Heart right ventricle (tissue), 16 donors: ENCODE measurements at regions of chr18 and their contacts with region 1.

Region 1: DNA sequence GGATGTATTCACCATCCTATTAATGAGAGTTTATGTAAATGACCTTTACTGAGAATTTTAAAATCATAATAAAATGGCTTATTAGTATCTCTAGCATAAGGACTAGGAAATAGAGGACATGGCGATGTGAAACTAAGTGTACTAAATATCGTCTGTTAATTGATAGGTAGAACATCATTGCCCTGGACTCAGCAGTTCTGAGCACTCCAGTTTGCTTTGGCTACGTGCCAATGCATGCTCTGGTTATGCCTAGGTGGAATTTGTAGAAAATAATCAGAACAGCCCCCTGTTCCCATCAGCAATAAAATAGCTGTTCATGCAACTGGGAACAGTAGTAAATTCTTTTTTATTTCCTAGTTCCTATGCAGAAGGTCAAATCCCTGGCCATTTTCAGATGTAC is 247.8 kb downstream of the DOK6 start:
- DNase-seq: no peak
- ATAC-seq: no peak
- H3K4me3 ChIP-seq: no peak overlapping the region
- H3K27ac ChIP-seq: no peak overlapping the region
- H3K4me1 ChIP-seq: no peaks in the 10 kb centered on the region
- H3K27me3 ChIP-seq: no peaks in the 10 kb centered on the region
- CTCF ChIP-seq: no peak

Region 2: GRCh38 chr18:69580107-69580506 is 68.4 kb before region 1 on chr18:
- intact Hi-C with region 1: loop called in 1 of 10 experiments (anchors 10 kb)
- DNase-seq: no peak
- ATAC-seq: peak in 3 of 8 donors; percentile 31 to 63 (median 31)
- H3K4me3 ChIP-seq: no peak overlapping the region
- H3K27ac ChIP-seq: no peak overlapping the region
- H3K4me1 ChIP-seq: no peaks in the 10 kb centered on the region
- H3K27me3 ChIP-seq: no peaks in the 10 kb centered on the region
- CTCF ChIP-seq: no peak

Region 3: DNA sequence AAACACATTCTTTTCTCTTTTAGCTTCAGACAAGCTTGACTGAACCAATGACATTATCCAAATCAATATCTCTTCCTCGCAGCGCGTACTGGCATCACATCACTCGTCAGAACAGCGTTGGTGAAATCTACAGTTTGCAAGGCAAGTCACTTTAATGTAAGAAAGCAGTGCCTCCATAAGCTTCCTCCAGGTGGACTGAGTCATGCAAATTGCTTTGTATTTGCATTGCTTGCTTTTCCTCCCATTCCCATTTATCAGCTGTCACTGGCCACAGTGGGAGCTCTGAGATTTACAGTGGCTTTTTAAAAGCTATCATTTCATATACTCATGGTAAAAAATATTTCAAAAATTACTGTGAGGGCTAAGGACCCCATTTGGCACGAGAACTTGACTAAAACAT is 109.2 kb after region 1 on chr18:
- intact Hi-C with region 1: no loop called
- DNase-seq: no peak
- ATAC-seq: no peak
- H3K4me3 ChIP-seq: no peak overlapping the region
- H3K27ac ChIP-seq: no peak overlapping the region
- H3K4me1 ChIP-seq: no peaks in the 10 kb centered on the region
- H3K27me3 ChIP-seq: no peaks in the 10 kb centered on the region
- CTCF ChIP-seq: no peak

Region 4: GRCh38 chr18:70205421-70206397 is 557.2 kb after region 1 on chr18 and contains the start of gene RTTN:
- intact Hi-C with region 1: no loop called
- DNase-seq: peak; percentile 94 to 95
- ATAC-seq: peak; percentile 100
- H3K4me3 ChIP-seq: peak within 1 kb of the TSS; percentile 32 to 89 (median 74)
- H3K27ac ChIP-seq: peak within 1 kb of the TSS; percentile 91 to 99 (median 97)
- H3K4me1 ChIP-seq: peaks cover 0 to 22% (median 16%) of the 10 kb centered on the region in 9 donors
- H3K27me3 ChIP-seq: peaks cover 0 to 2% (median 0%) of the 10 kb centered on the region in 7 donors
- CTCF ChIP-seq: no peak
- total RNA-seq, gene RTTN: 6.5 to 15.7 (median 10.2) TPM